ENCODE measurements at regions of chr2 and their contacts with region 1.

Region 1: DNA sequence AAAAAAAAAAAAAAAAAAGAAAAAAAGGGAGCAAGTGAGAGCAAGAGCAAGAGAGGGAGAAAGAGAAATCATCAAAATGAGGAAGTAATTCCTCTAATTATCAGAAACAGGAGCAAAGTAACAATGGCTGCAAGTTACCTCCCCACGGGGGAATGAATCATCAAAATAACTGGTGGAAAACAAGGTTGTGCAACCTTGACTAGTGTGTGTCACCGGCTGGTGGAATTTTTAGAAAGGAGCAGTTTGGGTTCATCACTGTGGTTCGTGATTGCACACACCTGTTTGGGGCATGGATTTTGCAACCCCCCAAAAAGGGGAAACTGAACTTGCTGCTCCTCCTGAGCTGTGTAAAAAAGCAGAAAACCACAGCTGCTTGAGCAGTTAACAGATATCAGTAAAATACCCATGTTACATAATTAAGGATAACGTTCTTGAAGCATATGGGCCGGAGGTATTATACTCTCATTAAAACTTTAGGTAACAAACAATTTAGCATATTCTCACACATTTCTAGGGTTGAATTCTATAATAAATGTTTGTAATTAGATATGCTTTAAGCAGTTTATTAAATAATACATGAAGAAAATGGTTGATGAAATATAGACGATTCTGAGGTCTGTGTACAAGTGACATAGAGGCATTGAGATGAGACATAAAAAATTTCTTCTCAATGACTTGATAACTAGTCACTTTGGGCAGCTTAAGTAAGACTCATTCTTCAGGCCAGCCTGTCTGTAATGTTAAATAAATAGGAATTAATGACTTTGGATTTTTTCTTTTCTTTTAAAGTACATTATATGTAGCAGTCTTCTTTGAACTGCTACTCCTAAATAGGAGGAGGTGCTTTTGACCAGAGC is 184.2 kb upstream of the ZEB2 start:
- DNase-seq: no peak
- H3K4me3 ChIP-seq: no peak overlapping the region
- H3K27ac ChIP-seq: no peak overlapping the region
- H3K27me3 ChIP-seq: no peaks in the 10 kb centered on the region
- CTCF ChIP-seq: no peak

Region 2: GRCh38 chr2:144529841-144530240 is 174.2 kb before region 1 on chr2:
- intact Hi-C with region 1: loop called in 1 of 2 experiments (anchors 5 kb)
- DNase-seq: no peak
- H3K4me3 ChIP-seq: no peak overlapping the region
- H3K27ac ChIP-seq: peak overlapping the region in 4 of 59 donors; percentile 3 to 48 (median 26)
- H3K27me3 ChIP-seq: no peaks in the 10 kb centered on the region
- CTCF ChIP-seq: no peak

Region 3: DNA sequence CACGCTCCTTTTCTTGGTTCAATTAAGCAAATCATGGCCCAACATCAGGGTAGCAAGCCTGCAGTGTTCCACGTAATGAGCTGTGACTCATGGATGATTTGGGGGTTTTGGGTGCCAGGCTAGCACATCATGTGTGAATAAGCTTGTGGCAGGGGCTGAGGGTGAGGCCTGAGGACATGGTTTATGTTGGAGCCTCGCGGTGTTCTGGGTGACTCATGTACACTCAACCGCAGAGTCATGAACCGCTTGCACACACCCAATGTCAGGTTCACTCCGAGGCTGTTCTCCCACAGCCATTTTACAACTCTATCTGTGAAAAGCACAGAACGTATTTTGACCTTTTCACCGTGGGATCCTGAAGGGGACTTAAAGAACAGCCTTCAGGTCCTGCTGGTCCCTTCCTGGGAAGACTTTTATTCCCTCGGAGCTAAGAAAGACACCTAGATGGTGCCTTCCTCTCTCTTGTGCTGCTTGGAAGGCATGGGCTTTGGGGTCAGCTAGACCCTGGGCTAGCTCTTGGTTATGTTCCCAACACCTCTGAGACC is 44.3 kb before region 1 on chr2:
- intact Hi-C with region 1: no loop called
- DNase-seq: no peak
- H3K4me3 ChIP-seq: no peak overlapping the region
- H3K27ac ChIP-seq: no peak overlapping the region
- H3K27me3 ChIP-seq: no peaks in the 10 kb centered on the region
- CTCF ChIP-seq: no peak

Region 4: DNA sequence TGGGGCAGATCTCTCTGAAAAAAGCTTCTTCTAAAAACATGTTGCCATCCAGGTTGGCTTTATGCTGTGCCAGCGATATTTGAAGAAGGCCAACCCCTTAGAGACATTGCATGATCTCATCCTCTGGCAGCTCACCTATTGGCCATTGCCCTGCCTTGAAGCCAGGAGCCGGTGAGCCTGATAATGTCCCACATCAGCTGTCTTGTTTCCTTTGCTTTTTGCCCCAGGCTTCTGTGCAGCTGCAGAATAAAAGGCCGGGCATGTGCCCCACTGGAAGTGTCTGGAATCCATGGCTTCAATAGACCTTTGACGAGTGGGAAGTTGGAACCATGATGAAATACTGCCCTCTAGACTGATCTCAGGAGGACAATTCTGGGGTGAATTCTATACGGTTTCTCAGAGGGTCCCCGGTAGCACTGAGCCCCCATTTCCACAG is 339.3 kb after region 1 on chr2:
- intact Hi-C with region 1: loop called in 1 of 2 experiments (anchors 10 kb)
- DNase-seq: peak in 9 of 10 donors; percentile 44 to 89 (median 72)
- H3K4me3 ChIP-seq: no peak overlapping the region
- H3K27ac ChIP-seq: peak overlapping the region in 55 of 59 donors; percentile 18 to 90 (median 75)
- H3K27me3 ChIP-seq: no peaks in the 10 kb centered on the region
- CTCF ChIP-seq: peak in 54 of 56 donors; percentile 17 to 76 (median 52)

Region 5: DNA sequence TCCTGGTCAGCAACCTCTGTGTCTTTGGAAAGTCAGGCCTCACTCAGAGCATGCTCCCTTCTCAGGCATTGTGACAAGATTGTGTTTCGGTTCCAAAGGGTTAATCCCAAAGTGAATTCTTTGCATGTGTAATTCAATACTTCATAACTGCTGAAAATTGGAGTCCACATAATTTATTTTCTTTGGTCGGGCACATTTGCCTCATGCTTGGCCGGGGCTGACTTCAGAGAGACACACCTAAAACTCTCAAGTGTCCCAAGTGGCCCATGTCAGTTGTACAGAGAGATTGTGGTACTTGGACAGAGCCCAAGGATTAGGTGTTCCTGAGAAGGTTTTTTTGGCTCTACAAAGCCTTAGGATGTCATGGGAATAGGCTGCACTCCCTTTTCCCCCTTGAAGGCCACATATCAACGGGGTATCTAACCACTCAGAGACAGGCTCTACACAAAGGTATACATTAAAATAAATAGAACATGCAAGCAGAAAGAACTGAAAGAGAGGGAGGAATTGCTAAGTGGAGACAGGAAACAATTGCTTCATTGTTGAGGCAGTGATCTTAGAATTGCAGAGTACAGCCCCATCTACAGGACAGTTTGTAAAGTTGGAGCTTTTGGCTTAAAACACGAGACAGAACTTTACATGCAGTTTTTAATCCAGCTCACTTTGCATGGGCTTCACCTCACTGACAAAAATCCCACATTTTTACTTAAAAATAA is 1048.2 kb after region 1 on chr2:
- intact Hi-C with region 1: loop called in 1 of 2 experiments (anchors 5 kb)
- DNase-seq: peak in 1 of 10 donors; percentile 14
- H3K4me3 ChIP-seq: peak overlapping the region in 44 of 59 donors; percentile 2 to 52 (median 31)
- H3K27ac ChIP-seq: peak overlapping the region in 56 of 59 donors; percentile 3 to 86 (median 68)
- H3K27me3 ChIP-seq: no peaks in the 10 kb centered on the region
- CTCF ChIP-seq: peak; percentile 60 to 90 (median 82)